ENCODE measurements at regions of chr15 and their contacts with region 1.

Region 1: GRCh38 chr15:29590701-29591100 is 231.6 kb downstream of the TJP1 start:
- DNase-seq: no peak
- ATAC-seq: no peak
- H3K4me3 ChIP-seq: no peak overlapping the region
- H3K27ac ChIP-seq: no peak overlapping the region
- H3K4me1 ChIP-seq: no peaks in the 10 kb centered on the region
- H3K27me3 ChIP-seq: peaks cover 4% of the 10 kb centered on the region; the same call in 1 of the 2 replicates
- CTCF ChIP-seq: no peak

Region 2: GRCh38 chr15:29259233-29259632 is 331.5 kb before region 1 on chr15:
- CTCF ChIA-PET with region 1: no interaction called
- POLR2A ChIA-PET with region 1: interaction called, 11 read pairs
- in situ Hi-C with region 1: no loop called
- intact Hi-C with region 1: no loop called
- DNase-seq: no peak
- ATAC-seq: no peak
- H3K4me3 ChIP-seq: no peak overlapping the region
- H3K27ac ChIP-seq: no peak overlapping the region
- H3K4me1 ChIP-seq: no peaks in the 10 kb centered on the region
- H3K27me3 ChIP-seq: no peaks in the 10 kb centered on the region
- CTCF ChIP-seq: peak; percentile 27; the same call in 1 of the 2 replicates

Measured in Panc1 (cell line).